ENCODE measurements at regions of chr16 and their contacts with region 1.

Region 1: DNA sequence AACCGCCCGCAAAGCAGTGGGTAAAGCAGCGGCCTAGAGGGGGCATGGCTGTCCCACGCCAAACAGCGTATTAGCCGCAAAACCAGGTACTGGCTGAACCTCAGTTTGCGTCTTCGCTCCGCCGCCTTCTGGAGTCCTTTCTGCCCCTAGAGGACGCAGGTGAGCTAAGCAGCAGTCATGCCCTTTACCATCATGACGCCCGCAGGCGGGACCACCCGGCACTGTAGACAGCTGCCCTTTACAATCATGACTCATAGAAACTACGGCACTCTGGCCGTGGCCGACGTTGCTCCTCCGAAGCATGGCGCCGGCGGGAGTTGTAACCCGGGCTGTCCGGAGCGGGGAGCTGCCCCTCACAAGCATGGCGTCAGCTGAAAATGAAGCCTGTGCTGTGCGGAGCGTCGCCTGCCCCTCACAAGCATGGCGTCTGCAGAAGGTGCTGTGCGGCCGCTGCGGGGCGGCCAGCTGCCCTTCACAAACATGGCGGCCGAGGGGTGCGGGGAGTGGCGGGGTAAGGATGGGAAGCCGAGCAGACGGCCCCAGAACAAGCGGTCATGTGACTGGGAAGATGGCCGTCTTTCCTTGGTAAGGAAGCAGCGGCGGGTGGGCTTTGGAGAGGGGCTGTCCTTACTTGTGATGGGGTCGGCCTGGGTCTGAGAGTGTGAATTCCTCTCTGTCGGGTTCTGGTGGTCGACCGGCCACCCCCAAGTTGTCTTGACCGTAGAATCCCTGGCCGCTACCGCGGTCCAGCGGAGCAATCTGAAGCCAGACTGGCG is at the start of gene VPS35L:
- DNase-seq: peak; percentile 93
- H3K4me3 ChIP-seq: peak within 1 kb of the TSS; percentile 73 to 86
- H3K27ac ChIP-seq: peak within 1 kb of the TSS; percentile 88 to 91
- H3K4me1 ChIP-seq: peaks cover 0 to 4% of the 10 kb centered on the region in 2 experiments; a peak in 1 of 4 replicates
- H3K27me3 ChIP-seq: no peaks in the 10 kb centered on the region
- CTCF ChIP-seq: peak; percentile 68
- EP300 ChIP-seq: no peak
- RAD21 ChIP-seq: peak; percentile 22; the same call in 1 of the 2 replicates
- polyA plus RNA-seq, gene VPS35L: 24.8 and 35.3 TPM in 2 replicates

Region 2: DNA sequence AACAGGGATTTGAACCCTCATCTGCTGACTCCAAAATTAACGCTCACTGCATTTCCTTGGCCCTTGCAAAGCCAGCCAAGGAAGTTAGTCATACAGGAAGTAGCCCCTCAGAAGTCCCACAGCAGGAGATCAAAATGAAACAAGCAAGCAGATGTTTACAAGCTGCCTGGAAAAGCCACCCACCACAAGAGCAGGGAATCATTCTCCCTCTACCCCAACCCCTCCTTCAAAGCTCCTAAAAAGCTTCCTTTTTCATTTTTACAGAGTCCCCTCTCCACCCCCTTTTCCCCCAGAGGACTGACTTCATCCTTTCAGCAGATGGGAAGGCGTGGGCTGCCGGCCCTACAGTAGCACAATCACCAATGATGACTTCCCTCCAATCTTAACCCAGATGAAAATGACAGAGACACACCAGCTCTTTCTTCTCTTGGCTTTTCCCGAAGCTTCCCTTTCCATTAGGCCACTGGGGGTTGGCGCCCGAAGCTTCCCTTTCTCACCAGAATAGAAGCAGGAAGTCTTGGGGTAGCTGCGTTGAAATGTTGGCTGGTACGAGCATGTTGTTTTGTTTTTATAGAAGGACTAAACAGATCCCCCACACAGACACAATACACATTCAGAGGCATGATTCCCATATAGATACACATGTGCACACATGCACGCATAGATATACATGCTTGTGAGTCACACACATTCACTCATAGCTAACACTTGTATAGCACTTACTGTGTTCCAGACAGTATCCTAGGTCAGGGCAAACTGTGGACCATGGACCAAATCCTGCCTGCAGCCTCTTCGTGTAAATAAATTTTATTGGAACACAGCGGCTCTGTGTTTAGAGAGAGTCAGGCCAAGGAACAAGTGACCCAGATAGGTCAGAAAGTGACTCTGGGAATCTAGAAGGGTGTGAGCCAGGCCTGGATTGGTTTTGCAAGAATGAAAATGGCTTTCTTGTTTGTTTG is 424.2 kb before region 1 on chr16:
- CTCF ChIA-PET with region 1: no interaction called
- POLR2A ChIA-PET with region 1: no interaction called
- DNase-seq: no peak
- H3K4me3 ChIP-seq: no peak overlapping the region; a peak in 1 of 4 replicates
- H3K27ac ChIP-seq: peak overlapping the region in 1 of 2 experiments; percentile 58; a peak in 2 of 4 replicates
- H3K4me1 ChIP-seq: peaks cover 4 to 42% of the 10 kb centered on the region in 2 experiments; a peak in 2 of 4 replicates
- H3K27me3 ChIP-seq: no peaks in the 10 kb centered on the region
- CTCF ChIP-seq: no peak
- EP300 ChIP-seq: no peak
- RAD21 ChIP-seq: no peak

Region 3: DNA sequence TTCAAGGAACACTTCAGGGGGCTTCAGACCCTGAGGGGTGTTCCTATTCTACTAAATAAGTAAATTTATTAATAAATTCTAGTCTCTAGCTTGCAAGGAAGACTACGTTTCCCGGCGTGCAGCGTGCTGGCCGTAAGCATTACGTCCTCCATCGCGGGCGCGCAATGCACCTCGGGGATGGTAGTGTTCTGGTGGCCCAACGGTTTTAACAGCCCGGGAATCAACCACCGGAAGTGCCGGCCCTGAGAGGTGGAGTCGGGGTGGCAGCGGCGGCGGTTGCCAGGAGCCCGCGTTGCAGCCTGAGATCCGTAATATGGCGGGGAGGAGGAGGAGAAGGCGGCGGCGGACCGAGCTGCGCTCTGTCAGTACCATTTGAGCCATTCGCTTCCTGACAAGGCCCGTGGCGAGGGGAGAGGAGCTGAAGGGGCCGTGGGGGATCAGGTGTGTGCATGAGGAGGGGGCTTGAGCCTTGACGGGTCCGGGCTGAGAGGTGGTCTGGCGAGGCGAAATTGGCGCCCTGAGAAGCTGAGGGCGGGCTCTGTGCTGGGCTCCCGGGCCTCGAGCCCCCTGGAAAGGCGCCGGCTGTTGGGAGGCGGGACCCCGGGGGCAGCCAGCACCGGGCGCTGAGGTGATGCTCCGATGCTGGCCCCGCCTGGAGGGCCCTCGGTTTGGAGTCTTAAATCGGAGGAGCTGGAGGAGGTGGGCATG is 31.5 kb before region 1 on chr16 and contains the start of gene CCP110:
- CTCF ChIA-PET with region 1: interaction called, 14 read pairs
- POLR2A ChIA-PET with region 1: interaction called, 15 read pairs
- DNase-seq: peak; percentile 93
- H3K4me3 ChIP-seq: peak within 1 kb of the TSS; percentile 93 to 99
- H3K27ac ChIP-seq: peak within 1 kb of the TSS; percentile 54 to 85
- H3K4me1 ChIP-seq: peaks cover 8 to 21% of the 10 kb centered on the region in 2 experiments; a peak in 3 of 4 replicates
- H3K27me3 ChIP-seq: no peaks in the 10 kb centered on the region
- CTCF ChIP-seq: no peak
- EP300 ChIP-seq: no peak
- RAD21 ChIP-seq: no peak
- polyA plus RNA-seq, gene CCP110: 5.4 and 7.0 TPM in 2 replicates

Region 4: GRCh38 chr16:19542138-19542821 is 13.1 kb before region 1 on chr16:
- CTCF ChIA-PET with region 1: interaction called, 14 read pairs
- POLR2A ChIA-PET with region 1: no interaction called
- DNase-seq: no peak
- H3K4me3 ChIP-seq: no peak overlapping the region
- H3K27ac ChIP-seq: no peak overlapping the region
- H3K4me1 ChIP-seq: no peaks in the 10 kb centered on the region
- H3K27me3 ChIP-seq: no peaks in the 10 kb centered on the region
- CTCF ChIP-seq: no peak
- EP300 ChIP-seq: no peak
- RAD21 ChIP-seq: no peak

Region 5: DNA sequence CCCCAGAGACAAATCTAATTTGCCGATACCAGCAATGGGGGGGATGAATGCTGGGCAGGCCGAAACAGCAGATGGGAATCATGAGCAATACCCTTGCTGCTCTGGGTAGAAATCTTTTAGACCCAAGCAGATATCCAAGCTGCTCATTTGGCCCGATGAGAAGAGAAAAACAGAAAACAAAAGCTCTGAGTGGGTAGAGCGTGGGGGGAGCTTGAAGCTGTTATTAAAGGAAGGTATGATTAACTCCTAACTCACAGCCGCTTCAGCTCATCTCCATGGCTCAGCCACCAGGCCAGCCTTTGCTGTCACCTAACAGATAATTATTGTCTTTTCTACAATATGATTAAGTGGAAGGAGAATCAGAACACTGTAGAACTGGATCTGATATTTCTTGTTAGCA is 58.5 kb after region 1 on chr16:
- CTCF ChIA-PET with region 1: no interaction called
- POLR2A ChIA-PET with region 1: no interaction called
- DNase-seq: no peak
- H3K4me3 ChIP-seq: no peak overlapping the region
- H3K27ac ChIP-seq: no peak overlapping the region
- H3K4me1 ChIP-seq: no peaks in the 10 kb centered on the region
- H3K27me3 ChIP-seq: no peaks in the 10 kb centered on the region
- CTCF ChIP-seq: no peak
- EP300 ChIP-seq: no peak
- RAD21 ChIP-seq: no peak